ENCODE measurements at regions of chr17 and their contacts with region 1.

Region 1: DNA sequence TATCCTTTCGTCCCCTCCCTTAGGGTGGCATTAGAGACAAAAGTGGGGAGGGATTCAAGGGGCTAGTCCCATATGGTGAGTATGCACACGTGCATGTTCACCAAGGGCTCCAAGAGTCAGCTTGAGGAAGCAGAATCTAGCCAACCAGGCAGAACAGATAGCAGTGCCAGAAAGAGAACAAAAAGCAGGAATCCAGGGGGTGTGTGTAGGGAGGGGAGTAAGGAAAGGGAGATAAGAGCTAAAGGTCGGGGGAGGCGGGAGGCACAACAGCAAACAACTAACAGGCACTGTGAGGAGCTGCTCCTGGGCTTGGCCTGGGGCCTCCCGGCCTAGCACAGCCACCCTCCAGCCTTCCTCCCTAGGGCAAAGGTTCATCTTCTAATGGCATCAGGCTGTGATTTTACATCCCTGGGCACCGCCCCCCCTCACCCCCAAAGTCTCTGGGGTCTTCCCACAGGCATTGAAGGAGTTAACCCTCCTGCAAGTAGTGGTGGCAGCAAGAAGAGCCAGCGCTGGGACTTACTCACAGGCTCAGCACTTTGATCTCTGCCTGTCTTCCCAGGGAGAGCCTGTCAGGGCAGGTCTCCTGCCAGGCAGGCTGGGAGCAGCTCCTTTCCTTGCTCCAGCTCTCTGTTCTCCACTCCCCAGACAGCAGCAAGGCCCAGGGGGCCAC is 12.4 kb upstream of the SUPT4H1 start:
- DNase-seq: peak; percentile 84 to 92
- H3K4me3 ChIP-seq: no peak overlapping the region
- H3K4me3 Mint-ChIP-seq: peak overlapping the region; percentile 43
- H3K27ac Mint-ChIP-seq: peak overlapping the region; percentile 67
- H3K4me1 ChIP-seq: peaks cover 61% of the 10 kb centered on the region
- H3K4me1 Mint-ChIP-seq: peaks cover 63% of the 10 kb centered on the region
- H3K27me3 ChIP-seq: no peaks in the 10 kb centered on the region
- H3K27me3 Mint-ChIP-seq: no peaks in the 10 kb centered on the region
- CTCF ChIP-seq: no peak

Region 2: GRCh38 chr17:58337600-58338453 is 26.6 kb before region 1 on chr17:
- CTCF ChIA-PET with region 1: no interaction called
- POLR2A ChIA-PET with region 1: no interaction called
- intact Hi-C with region 1: no loop called
- DNase-seq: peak; percentile 73 to 78
- H3K4me3 ChIP-seq: no peak overlapping the region
- H3K4me3 Mint-ChIP-seq: no peak overlapping the region
- H3K27ac Mint-ChIP-seq: peak overlapping the region; percentile 74
- H3K4me1 ChIP-seq: peaks cover 34% of the 10 kb centered on the region
- H3K4me1 Mint-ChIP-seq: peaks cover 15% of the 10 kb centered on the region
- H3K27me3 ChIP-seq: no peaks in the 10 kb centered on the region
- H3K27me3 Mint-ChIP-seq: no peaks in the 10 kb centered on the region
- CTCF ChIP-seq: no peak

Region 3: DNA sequence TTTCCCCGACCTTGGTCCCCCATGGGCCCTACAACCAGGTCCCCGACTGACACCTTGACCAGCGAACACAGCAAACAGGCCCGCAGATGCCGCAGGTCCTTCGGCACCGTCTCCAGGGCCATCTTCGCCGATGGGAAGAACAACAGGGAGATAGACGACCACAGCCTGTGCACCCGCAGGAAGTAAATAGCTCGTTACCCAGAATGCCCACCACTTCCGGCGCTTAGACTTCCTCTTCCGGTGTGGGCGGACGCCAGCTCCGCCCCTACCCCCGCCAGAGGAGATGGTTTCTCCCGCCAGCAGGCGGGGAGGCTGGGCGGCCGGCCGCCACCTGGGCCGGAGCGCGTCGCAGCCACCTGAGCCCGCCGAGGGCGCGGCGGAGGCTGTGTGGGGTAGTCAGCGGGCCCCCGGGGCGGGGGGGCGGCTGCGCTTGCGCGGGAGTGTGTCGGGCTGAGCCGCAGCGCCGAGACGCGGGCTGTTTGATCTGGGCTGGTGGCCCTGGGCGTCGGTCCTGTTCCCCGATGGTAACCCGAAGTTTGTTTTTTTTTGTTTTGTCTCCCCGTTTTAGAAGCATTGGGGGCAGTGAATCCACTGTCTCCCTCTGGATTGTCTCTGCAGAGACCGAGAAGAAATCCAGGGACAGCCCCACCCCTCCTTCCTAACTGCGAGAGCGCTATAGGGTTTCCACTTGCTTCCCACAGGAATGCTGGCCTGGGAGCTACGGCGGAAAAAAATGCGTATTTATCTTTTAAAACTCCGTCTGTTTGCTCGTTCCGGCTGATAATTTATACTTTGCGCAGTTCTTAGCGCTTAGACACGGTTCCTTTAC is 12.2 kb before region 1 on chr17 and contains the start of gene SUPT4H1:
- CTCF ChIA-PET with region 1: interaction called, 6 read pairs
- POLR2A ChIA-PET with region 1: interaction called, 25 read pairs
- intact Hi-C with region 1: loop called (anchors 1 kb)
- DNase-seq: peak; percentile 89 to 91
- H3K4me3 ChIP-seq: peak within 1 kb of the TSS; percentile 48
- H3K4me3 Mint-ChIP-seq: peak within 1 kb of the TSS; percentile 82
- H3K27ac Mint-ChIP-seq: peak within 1 kb of the TSS; percentile 81
- H3K4me1 ChIP-seq: no peaks in the 10 kb centered on the region
- H3K4me1 Mint-ChIP-seq: peaks cover 11% of the 10 kb centered on the region
- H3K27me3 ChIP-seq: no peaks in the 10 kb centered on the region
- H3K27me3 Mint-ChIP-seq: no peaks in the 10 kb centered on the region
- CTCF ChIP-seq: no peak
- total RNA-seq, gene SUPT4H1: 70.9 and 71.4 TPM in 2 replicates

Region 4: DNA sequence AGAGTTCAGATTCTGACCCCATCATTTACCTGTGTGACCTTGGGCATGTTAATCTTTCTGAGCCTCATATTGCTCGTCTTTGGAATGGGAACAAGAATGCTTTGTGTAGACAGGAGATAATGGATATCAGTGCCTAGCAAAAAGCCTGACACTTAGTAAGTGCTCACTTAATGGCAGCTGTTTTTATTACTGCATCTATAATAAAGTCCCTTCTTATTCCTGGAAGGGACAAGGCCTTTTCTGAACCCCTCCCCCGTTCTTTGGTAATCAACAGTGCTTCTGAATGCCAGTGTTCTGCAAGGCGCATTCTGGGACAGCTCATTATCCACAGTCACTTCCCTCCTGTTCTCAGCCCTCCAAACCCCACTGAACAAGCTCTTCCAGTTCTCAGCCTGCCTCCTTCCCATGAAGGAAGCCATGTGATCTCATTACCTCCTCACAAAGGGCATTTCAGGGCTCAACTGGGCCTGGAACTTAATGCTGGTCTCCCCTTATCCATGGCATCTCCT is 12.7 kb after region 1 on chr17:
- CTCF ChIA-PET with region 1: interaction called, 8 read pairs
- POLR2A ChIA-PET with region 1: interaction called, 6 read pairs
- intact Hi-C with region 1: loop called (anchors 1 kb)
- DNase-seq: peak; percentile 81 to 89
- H3K4me3 ChIP-seq: no peak overlapping the region
- H3K4me3 Mint-ChIP-seq: peak overlapping the region; percentile 25
- H3K27ac Mint-ChIP-seq: peak overlapping the region; percentile 58
- H3K4me1 ChIP-seq: peaks cover 88% of the 10 kb centered on the region
- H3K4me1 Mint-ChIP-seq: peaks cover 74% of the 10 kb centered on the region
- H3K27me3 ChIP-seq: no peaks in the 10 kb centered on the region
- H3K27me3 Mint-ChIP-seq: no peaks in the 10 kb centered on the region
- CTCF ChIP-seq: no peak

Region 5: DNA sequence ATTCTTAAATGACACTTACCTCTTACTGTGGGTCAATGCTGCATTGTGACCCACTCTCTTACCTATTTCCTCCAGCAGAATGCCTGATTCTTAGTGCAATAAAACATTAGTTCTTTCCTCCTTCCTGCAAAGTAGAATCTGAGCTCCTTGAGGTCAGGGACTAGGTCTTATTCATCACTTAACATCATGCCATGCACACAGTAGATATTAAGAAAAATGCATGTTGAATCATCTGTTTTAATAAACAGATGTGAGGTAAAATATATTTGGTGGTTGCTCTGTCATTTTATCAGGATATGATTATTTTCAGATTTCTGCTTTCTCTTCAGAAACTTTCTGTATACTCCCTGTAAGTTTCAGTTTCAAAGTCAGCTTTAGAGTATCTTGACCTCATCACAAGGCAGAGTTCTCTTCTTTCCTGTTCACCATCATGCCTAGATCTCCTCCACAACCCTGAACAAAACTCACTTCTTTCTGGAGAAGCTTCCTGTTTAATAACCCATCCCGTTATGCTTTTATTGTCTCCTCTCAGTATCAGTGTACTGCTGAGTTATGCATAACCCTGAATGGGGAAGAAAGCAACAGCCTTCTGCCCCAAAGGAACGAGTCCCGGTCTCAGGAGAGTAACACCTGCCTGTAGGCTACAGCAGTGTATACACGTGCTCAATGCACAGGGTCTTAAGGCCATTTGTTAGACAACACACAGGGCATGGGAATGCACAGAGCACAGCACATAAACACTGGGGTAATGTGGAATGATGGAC is 17.9 kb after region 1 on chr17:
- CTCF ChIA-PET with region 1: interaction called, 8 read pairs
- POLR2A ChIA-PET with region 1: interaction called, 6 read pairs
- intact Hi-C with region 1: loop called (anchors 1 kb)
- DNase-seq: no peak
- H3K4me3 ChIP-seq: no peak overlapping the region
- H3K4me3 Mint-ChIP-seq: peak overlapping the region; percentile 10
- H3K27ac Mint-ChIP-seq: peak overlapping the region; percentile 59
- H3K4me1 ChIP-seq: peaks cover 98% of the 10 kb centered on the region
- H3K4me1 Mint-ChIP-seq: peaks cover 67% of the 10 kb centered on the region
- H3K27me3 ChIP-seq: no peaks in the 10 kb centered on the region
- H3K27me3 Mint-ChIP-seq: no peaks in the 10 kb centered on the region
- CTCF ChIP-seq: no peak

Region 6: DNA sequence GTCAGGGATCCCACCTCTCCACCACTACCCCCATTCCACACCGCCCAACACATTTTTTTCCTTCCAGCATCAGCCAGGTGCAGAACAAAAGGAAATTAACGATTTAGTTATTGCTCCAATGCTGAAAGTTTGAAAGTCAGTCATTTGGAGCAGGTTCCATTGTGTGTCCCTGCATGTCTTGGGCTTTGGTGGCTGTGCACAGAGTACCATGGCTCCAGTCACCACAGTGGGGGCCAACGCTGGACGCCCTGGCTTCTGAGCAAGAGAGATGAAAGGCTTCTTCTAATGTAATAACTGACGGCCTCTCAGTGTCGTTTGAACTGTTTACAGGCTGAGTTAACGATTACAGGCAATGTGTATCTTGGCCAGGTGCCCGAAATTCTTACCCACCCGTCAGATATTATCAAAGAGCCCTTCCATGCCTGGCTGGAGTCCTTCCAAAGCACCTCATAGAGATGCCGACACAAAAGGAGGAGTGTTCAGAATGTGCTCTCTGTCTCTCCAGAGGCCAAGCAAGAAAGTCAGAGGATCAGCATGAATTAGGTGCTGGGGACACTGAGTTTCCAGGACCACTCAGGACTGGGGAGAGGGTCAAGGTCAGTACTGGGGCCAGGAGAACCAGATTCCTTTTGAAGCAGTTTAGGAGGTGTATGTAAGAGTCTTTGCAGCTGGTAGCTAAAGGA is 27.0 kb after region 1 on chr17:
- CTCF ChIA-PET with region 1: interaction called, 3 read pairs
- POLR2A ChIA-PET with region 1: no interaction called
- intact Hi-C with region 1: loop called (anchors 1 kb)
- DNase-seq: peak; percentile 93 to 96
- H3K4me3 ChIP-seq: no peak overlapping the region
- H3K4me3 Mint-ChIP-seq: peak overlapping the region; percentile 62
- H3K27ac Mint-ChIP-seq: peak overlapping the region; percentile 90
- H3K4me1 ChIP-seq: peaks cover 96% of the 10 kb centered on the region
- H3K4me1 Mint-ChIP-seq: peaks cover 68% of the 10 kb centered on the region
- H3K27me3 ChIP-seq: no peaks in the 10 kb centered on the region
- H3K27me3 Mint-ChIP-seq: no peaks in the 10 kb centered on the region
- CTCF ChIP-seq: no peak

Region 7: GRCh38 chr17:58565780-58566189 is 201.4 kb after region 1 on chr17:
- CTCF ChIA-PET with region 1: no interaction called
- POLR2A ChIA-PET with region 1: no interaction called
- intact Hi-C with region 1: no loop called
- DNase-seq: no peak
- H3K4me3 ChIP-seq: no peak overlapping the region
- H3K4me3 Mint-ChIP-seq: no peak overlapping the region
- H3K27ac Mint-ChIP-seq: no peak overlapping the region
- H3K4me1 ChIP-seq: no peaks in the 10 kb centered on the region
- H3K4me1 Mint-ChIP-seq: no peaks in the 10 kb centered on the region
- H3K27me3 ChIP-seq: no peaks in the 10 kb centered on the region
- H3K27me3 Mint-ChIP-seq: no peaks in the 10 kb centered on the region
- CTCF ChIP-seq: no peak